ENCODE measurements at regions of chr16 and their contacts with region 1.

Region 1: DNA sequence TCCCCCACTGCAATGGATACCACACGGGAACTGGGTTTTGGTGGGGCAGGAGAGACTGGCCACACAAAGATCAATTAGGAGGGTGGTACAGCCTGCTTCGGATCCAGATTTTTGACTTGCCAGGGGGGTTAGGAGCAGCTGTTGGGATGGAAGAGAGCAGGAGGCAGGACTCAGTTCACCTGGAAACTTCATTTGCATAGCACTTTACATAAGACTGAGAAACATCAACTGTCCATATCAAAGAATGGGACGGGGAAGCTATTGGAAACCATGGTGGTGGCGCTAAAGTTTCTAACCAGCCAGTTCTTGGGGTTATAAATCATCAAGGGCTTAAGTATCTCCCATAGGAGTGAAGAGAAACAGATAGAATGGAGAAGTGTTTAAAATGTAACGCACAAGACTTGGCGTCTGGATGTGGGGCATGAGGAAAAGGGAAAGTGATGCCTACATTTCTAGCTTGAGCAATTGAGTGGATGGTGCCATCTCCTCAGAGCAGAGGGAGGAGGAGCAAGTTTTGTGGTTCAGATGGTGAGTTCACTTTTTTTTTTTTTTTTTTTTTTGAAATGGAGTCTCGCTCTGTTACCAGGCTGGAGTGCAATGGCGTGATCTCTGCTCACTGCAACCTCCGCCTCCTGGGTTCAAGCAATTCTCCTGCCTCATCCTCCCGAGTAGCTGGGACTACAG is 6.4 kb upstream of the SRCAP start:
- DNase-seq: no peak

Region 2: DNA sequence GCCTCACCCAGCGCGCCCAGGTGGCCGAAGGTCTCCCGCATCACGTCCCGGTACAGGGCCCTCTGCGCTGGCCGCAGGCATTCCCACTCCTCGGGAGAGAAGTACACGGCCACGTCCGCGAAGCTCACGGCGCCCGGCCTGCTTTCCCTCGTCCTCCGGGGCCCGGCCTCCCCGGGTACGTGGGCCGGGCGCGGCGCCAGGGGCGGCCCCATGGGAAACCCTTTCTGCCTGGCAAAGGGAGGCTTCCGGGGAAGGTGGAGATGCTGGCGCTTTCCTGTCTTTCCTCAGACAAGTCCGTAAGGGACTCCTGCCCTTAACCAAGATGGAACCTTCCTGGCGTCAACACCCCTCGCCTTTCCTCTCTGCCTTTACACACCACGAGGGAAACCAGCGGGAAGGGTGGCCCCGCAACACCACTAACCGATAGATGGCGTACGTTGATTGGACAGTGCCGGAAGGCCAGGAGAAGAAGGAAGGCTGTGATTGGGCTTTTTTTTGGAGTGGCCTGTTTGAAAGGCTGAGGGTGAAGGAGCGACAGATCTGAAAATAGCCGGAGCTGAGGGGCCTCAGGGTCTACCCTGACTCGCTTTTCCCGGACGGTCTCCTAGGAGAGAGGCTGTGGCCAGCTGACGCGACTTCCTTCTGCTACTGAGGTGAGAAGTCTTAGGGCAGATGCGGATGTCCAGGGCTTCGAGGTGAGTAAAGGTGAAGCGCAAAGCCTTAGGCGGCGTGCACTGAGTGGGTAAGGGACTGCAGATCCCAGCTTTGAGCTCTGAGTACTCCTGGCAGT is 106.9 kb before region 1 on chr16 and contains the start of gene ZNF785:
- CTCF ChIA-PET with region 1: no interaction called
- POLR2A ChIA-PET with region 1: no interaction called
- DNase-seq: peak; percentile 23

Region 3: DNA sequence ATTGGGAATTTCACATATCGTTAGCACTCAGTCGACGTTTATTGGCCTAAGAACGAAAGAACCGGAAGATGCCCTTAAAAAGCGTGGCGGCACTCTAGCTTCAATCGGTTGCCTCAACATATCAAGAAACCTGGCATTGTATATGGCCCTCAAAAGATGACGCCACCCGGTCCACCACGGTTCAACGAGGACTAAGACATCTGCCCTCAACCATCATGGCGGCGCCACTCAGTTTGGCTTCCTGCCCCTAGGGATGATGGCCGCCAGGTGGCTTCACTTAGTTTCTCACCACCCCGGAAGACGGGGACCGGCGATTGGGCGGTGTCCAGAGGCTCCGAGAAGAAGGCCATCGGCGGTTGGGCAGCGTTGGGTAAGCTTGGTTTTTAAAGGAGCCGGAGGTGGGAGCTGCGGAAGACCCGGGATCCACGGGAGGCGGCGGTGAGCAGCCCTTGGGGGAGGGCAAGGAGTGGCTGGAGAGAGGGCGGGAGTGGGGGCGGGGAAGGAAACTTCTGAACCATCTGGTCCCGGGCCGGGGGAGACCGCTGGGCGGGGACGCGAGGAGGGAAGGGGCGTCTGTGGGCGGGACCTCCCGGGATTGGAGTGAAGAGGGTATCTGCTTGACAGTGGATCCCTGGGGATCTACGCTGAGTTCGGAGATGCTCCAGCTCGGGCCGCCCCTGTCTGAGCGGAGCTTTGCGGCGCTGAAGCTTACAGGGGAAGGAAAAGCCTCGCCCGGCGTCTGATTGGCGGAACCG is 42.0 kb before region 1 on chr16 and contains the start of gene PRR14:
- CTCF ChIA-PET with region 1: interaction called, 11 read pairs
- POLR2A ChIA-PET with region 1: interaction called, 7 read pairs
- DNase-seq: peak; percentile 99

Region 4: DNA sequence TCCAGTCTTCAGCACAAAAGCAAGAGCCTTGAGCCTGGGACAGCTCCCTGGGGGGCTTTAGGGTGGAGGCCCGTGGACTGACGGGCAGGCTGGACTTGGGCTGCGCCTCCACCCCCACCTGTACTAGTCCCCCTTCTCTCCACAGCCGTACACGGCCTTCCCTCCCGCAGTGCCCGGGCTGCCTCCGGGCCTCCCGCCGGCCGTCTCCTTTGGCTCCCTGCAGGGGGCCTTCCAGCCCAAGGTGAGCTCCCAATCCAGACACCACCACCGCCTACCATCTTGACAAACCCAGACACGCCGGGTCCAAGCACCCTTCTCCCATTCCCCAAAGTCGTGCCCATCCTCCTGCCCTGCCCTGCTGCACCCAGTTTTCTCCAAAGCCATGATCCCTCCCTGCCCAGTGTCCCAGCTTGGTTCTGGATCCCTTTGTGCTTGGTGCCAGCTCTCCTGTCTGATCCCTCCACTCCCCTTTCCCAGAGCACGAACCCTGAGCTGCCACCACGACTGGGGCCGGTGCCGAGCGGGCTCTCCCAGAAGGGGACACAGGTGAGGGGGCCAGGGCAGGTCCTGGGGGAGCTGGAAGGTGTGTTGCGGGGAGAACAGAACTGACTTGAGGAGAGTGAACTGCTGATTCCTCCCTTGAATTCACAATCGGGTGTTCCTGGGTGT is 27.2 kb before region 1 on chr16:
- CTCF ChIA-PET with region 1: interaction called, 10 read pairs
- POLR2A ChIA-PET with region 1: interaction called, 57 read pairs
- DNase-seq: no peak

Region 5: GRCh38 chr16:30844671-30845449 is 152.3 kb after region 1 on chr16:
- CTCF ChIA-PET with region 1: no interaction called
- POLR2A ChIA-PET with region 1: no interaction called
- DNase-seq: peak; percentile 93